Activated T-helper 1 cell treated with anti-CD3 and anti-CD28 coated beads, Interleukin-12 subunit alpha, Interleukin-12 subunit beta, Interleukin-2, Interleukin-4 antibody, amounts not matched to agents 30 ng/mL and 10 ng/mL and 1 ng/mL, durations not matched to agents 14 hours and 24 hours and 36 hours (primary cell): ENCODE measurements at regions of chr14 and their contacts with region 1.

Region 1: GRCh38 chr14:89445273-89445973 is 28.4 kb upstream of the FOXN3 start:
- DNase-seq: peak; percentile 11
- H3K4me3 Mint-ChIP-seq: peak overlapping the region; percentile 37
- H3K27ac Mint-ChIP-seq: peak overlapping the region; percentile 83
- H3K4me1 Mint-ChIP-seq: peaks cover 54% of the 10 kb centered on the region
- H3K27me3 Mint-ChIP-seq: no peaks in the 10 kb centered on the region

Region 2: GRCh38 chr14:89466484-89466883 is 21.1 kb after region 1 on chr14:
- intact Hi-C with region 1: loop called (anchors 2 kb)
- DNase-seq: peak; percentile 21
- H3K4me3 Mint-ChIP-seq: peak overlapping the region; percentile 43
- H3K27ac Mint-ChIP-seq: peak overlapping the region; percentile 57
- H3K4me1 Mint-ChIP-seq: peaks cover 24% of the 10 kb centered on the region
- H3K27me3 Mint-ChIP-seq: no peaks in the 10 kb centered on the region